ENCODE measurements at regions of chr14 and their contacts with region 1.

Region 1: GRCh38 chr14:60980811-60981632 is at the starts of genes SLC38A6 and TRMT5:
- DNase-seq: peak; percentile 80 to 95 (median 87)
- ATAC-seq: peak; percentile 88
- H3K4me3 ChIP-seq: peak within 1 kb of the TSS; percentile 75
- H3K4me3 Mint-ChIP-seq: no peak within 1 kb of the TSS
- H3K27ac ChIP-seq: peak within 1 kb of the TSS; percentile 79 to 83
- H3K27ac Mint-ChIP-seq: no peak within 1 kb of the TSS
- H3K4me1 ChIP-seq: peaks cover 17% of the 10 kb centered on the region
- H3K4me1 Mint-ChIP-seq: peaks cover 31% of the 10 kb centered on the region
- H3K27me3 ChIP-seq: no peaks in the 10 kb centered on the region
- H3K27me3 Mint-ChIP-seq: no peaks in the 10 kb centered on the region
- CTCF ChIP-seq: no peak
- total RNA-seq, gene SLC38A6: 9.4 to 10.0 TPM
- total RNA-seq, gene TRMT5: 3.6 to 3.8 TPM

Region 2: DNA sequence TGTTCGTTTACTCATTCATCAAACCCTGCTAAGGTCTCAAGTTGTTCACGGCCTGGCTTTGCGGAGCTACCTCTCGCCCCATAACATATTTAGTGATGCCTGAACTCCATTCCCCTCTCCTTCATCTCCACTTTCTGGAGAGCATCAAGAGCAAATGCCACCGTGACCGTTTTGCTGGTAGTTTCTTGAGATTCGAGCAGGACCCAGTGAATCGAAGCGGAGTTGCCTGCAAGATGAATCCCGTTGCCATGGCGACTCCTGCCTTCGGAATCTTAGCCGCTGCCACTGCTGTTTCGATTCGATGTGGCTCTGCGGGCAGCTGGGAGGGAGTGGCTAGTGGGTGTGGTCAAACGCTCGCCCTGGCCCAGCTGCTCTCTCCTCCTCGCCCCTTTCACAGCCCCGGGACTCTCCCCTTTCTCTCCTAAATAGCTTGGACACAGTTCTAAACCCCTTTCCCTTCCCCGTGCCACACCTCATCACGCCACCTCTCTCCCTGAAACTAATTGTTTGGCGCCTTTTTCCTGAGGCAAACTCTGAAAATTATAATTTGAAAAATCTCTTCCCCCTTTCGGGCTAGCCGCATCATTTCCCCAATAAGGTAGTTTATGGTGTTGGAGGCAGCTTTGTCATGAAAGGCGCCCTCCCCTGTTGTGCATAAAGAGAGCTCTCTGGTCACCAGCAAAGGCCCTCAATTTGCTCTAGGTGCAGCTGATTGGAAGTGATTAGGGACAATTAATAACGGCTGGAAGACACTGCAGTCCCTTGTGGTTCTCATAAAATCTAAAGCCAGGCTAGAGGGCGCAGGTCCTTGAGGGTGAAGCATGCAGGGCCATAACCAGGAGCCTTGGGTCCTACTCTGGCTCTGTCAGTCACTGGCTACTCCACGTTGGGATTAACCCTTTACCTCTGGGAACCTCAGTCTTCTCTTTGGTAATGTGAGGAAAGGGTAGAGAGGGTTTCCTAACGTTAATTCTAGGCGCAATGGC is 1790.9 kb before region 1 on chr14:
- CTCF ChIA-PET with region 1: no interaction called
- POLR2A ChIA-PET with region 1: no interaction called
- intact Hi-C with region 1: loop called in 1 of 2 experiments (anchors 10 kb)
- DNase-seq: peak; percentile 28 to 91 (median 56)
- ATAC-seq: no peak
- H3K4me3 ChIP-seq: peak overlapping the region; percentile 83
- H3K4me3 Mint-ChIP-seq: peak overlapping the region; percentile 99
- H3K27ac ChIP-seq: peak overlapping the region; percentile 84 to 87
- H3K27ac Mint-ChIP-seq: peak overlapping the region; percentile 94
- H3K4me1 ChIP-seq: peaks cover 20% of the 10 kb centered on the region
- H3K4me1 Mint-ChIP-seq: peaks cover 29% of the 10 kb centered on the region
- H3K27me3 ChIP-seq: no peaks in the 10 kb centered on the region
- H3K27me3 Mint-ChIP-seq: no peaks in the 10 kb centered on the region
- CTCF ChIP-seq: no peak

Region 3: GRCh38 chr14:60079724-60080123 is 901.3 kb before region 1 on chr14:
- CTCF ChIA-PET with region 1: no interaction called
- POLR2A ChIA-PET with region 1: no interaction called
- intact Hi-C with region 1: loop called in 1 of 2 experiments (anchors 10 kb)
- DNase-seq: no peak
- ATAC-seq: no peak
- H3K4me3 ChIP-seq: no peak overlapping the region
- H3K4me3 Mint-ChIP-seq: no peak overlapping the region
- H3K27ac ChIP-seq: no peak overlapping the region
- H3K27ac Mint-ChIP-seq: no peak overlapping the region
- H3K4me1 ChIP-seq: no peaks in the 10 kb centered on the region
- H3K4me1 Mint-ChIP-seq: no peaks in the 10 kb centered on the region
- H3K27me3 ChIP-seq: no peaks in the 10 kb centered on the region
- H3K27me3 Mint-ChIP-seq: peaks cover 22% of the 10 kb centered on the region
- CTCF ChIP-seq: no peak

Region 4: GRCh38 chr14:60734465-60735242 is 246.4 kb before region 1 on chr14 and contains the start of gene MNAT1:
- CTCF ChIA-PET with region 1: no interaction called
- POLR2A ChIA-PET with region 1: interaction called, 3 read pairs
- intact Hi-C with region 1: loop called (anchors 1 to 10 kb)
- DNase-seq: peak; percentile 59 to 85 (median 71)
- ATAC-seq: peak; percentile 96
- H3K4me3 ChIP-seq: peak within 1 kb of the TSS; percentile 73
- H3K4me3 Mint-ChIP-seq: peak within 1 kb of the TSS; percentile 98
- H3K27ac ChIP-seq: no peak within 1 kb of the TSS
- H3K27ac Mint-ChIP-seq: peak within 1 kb of the TSS; percentile 84
- H3K4me1 ChIP-seq: peaks cover 4% of the 10 kb centered on the region
- H3K4me1 Mint-ChIP-seq: peaks cover 37% of the 10 kb centered on the region
- H3K27me3 ChIP-seq: peaks cover 4 to 8% of the 10 kb centered on the region in 2 experiments
- H3K27me3 Mint-ChIP-seq: peaks cover 28% of the 10 kb centered on the region
- CTCF ChIP-seq: no peak
- total RNA-seq, gene MNAT1: 15.4 to 15.9 TPM